ENCODE measurements at regions of chr1 and their contacts with region 1.

Region 1: GRCh38 chr1:180912801-180913565 is at the start of gene KIAA1614:
- DNase-seq: no peak
- H3K4me3 ChIP-seq: peak within 1 kb of the TSS; percentile 48 to 51
- H3K27ac ChIP-seq: peak within 1 kb of the TSS; percentile 76 to 79
- H3K4me1 ChIP-seq: no peaks in the 10 kb centered on the region
- H3K27me3 ChIP-seq: no peaks in the 10 kb centered on the region
- CTCF ChIP-seq: no peak
- POLR2A ChIP-seq: no peak
- total RNA-seq, gene KIAA1614: 3.7 to 6.4 TPM

Region 2: GRCh38 chr1:180611016-180611930 is 301.7 kb before region 1 on chr1:
- intact Hi-C with region 1: no loop called
- DNase-seq: no peak
- H3K4me3 ChIP-seq: no peak overlapping the region
- H3K27ac ChIP-seq: peak overlapping the region in 1 of 2 donors; percentile 28
- H3K4me1 ChIP-seq: peaks cover 6% of the 10 kb centered on the region
- H3K27me3 ChIP-seq: no peaks in the 10 kb centered on the region
- CTCF ChIP-seq: no peak
- POLR2A ChIP-seq: no peak

Region 3: GRCh38 chr1:181021811-181022434 is 108.9 kb after region 1 on chr1:
- intact Hi-C with region 1: loop called (anchors 2 kb)
- DNase-seq: peak; percentile 70
- H3K4me3 ChIP-seq: peak overlapping the region; percentile 67 to 91
- H3K27ac ChIP-seq: peak overlapping the region; percentile 79 to 88
- H3K4me1 ChIP-seq: no peaks in the 10 kb centered on the region
- H3K27me3 ChIP-seq: no peaks in the 10 kb centered on the region
- CTCF ChIP-seq: no peak
- POLR2A ChIP-seq: peak; percentile 24